HepG2 (cell line): ENCODE measurements at regions of chr20 and their contacts with region 1.

Region 1: GRCh38 chr20:37345339-37346230 is at the start of gene SRC:
- DNase-seq: peak; percentile 74
- ATAC-seq: peak; percentile 29
- H3K4me3 ChIP-seq: peak within 1 kb of the TSS; percentile 78 to 89 (median 80)
- H3K27ac ChIP-seq: peak within 1 kb of the TSS; percentile 81
- H3K4me1 ChIP-seq: peaks cover 79% of the 10 kb centered on the region
- H3K27me3 ChIP-seq: peaks cover 0 to 5% of the 10 kb centered on the region in 2 experiments; a peak in 1 of 5 replicates
- CTCF ChIP-seq: no peak
- EP300 ChIP-seq: peak in 1 of 2 experiments; percentile 15; a peak in 1 of 4 replicates
- POLR2A ChIP-seq: peak; percentile 70 to 81
- RAD21 ChIP-seq: peak; percentile 47; the same call in 1 of the 2 replicates
- total RNA-seq, gene SRC: 54.7 and 59.7 TPM in 2 replicates

Region 2: GRCh38 chr20:37265152-37265551 is 80.4 kb before region 1 on chr20:
- CTCF ChIA-PET with region 1: no interaction called
- POLR2A ChIA-PET with region 1: interaction called, 16 read pairs
- in situ Hi-C with region 1: no loop called
- intact Hi-C with region 1: loop called (anchors 2 kb)
- DNase-seq: no peak
- ATAC-seq: no peak
- H3K4me3 ChIP-seq: no peak overlapping the region
- H3K27ac ChIP-seq: no peak overlapping the region
- H3K4me1 ChIP-seq: peaks cover 23% of the 10 kb centered on the region
- H3K27me3 ChIP-seq: peaks cover 9 to 46% of the 10 kb centered on the region in 2 experiments; a peak in 4 of 5 replicates
- CTCF ChIP-seq: no peak
- EP300 ChIP-seq: no peak
- POLR2A ChIP-seq: no peak
- RAD21 ChIP-seq: no peak

Region 3: GRCh38 chr20:37282556-37282955 is 63.0 kb before region 1 on chr20:
- CTCF ChIA-PET with region 1: no interaction called
- POLR2A ChIA-PET with region 1: interaction called, 48 read pairs
- in situ Hi-C with region 1: no loop called
- intact Hi-C with region 1: no loop called
- DNase-seq: no peak
- ATAC-seq: no peak
- H3K4me3 ChIP-seq: no peak overlapping the region
- H3K27ac ChIP-seq: no peak overlapping the region
- H3K4me1 ChIP-seq: peaks cover 74% of the 10 kb centered on the region
- H3K27me3 ChIP-seq: no peaks in the 10 kb centered on the region
- CTCF ChIP-seq: no peak
- EP300 ChIP-seq: no peak
- POLR2A ChIP-seq: no peak
- RAD21 ChIP-seq: no peak

Region 4: GRCh38 chr20:37331060-37331857 is 14.3 kb before region 1 on chr20:
- CTCF ChIA-PET with region 1: no interaction called
- POLR2A ChIA-PET with region 1: interaction called, 59 read pairs
- in situ Hi-C with region 1: no loop called
- intact Hi-C with region 1: loop called (anchors 1 kb)
- DNase-seq: no peak
- ATAC-seq: no peak
- H3K4me3 ChIP-seq: peak overlapping the region in 2 of 3 experiments; percentile 48 to 71; a peak in 2 of 6 replicates
- H3K27ac ChIP-seq: no peak overlapping the region
- H3K4me1 ChIP-seq: peaks cover 79% of the 10 kb centered on the region
- H3K27me3 ChIP-seq: no peaks in the 10 kb centered on the region
- CTCF ChIP-seq: no peak
- EP300 ChIP-seq: no peak
- POLR2A ChIP-seq: no peak
- RAD21 ChIP-seq: no peak

Region 5: GRCh38 chr20:37527638-37528441 is 182.3 kb after region 1 on chr20 and contains the start of gene BLCAP:
- CTCF ChIA-PET with region 1: no interaction called
- POLR2A ChIA-PET with region 1: interaction called, 16 read pairs
- in situ Hi-C with region 1: no loop called
- intact Hi-C with region 1: loop called (anchors 2 kb)
- DNase-seq: peak; percentile 93
- ATAC-seq: peak; percentile 91
- H3K4me3 ChIP-seq: peak within 1 kb of the TSS; percentile 82 to 100 (median 95)
- H3K27ac ChIP-seq: peak within 1 kb of the TSS; percentile 96
- H3K4me1 ChIP-seq: peaks cover 65% of the 10 kb centered on the region
- H3K27me3 ChIP-seq: no peaks in the 10 kb centered on the region; a peak in 1 of 5 replicates
- CTCF ChIP-seq: peak; percentile 39
- EP300 ChIP-seq: peak; percentile 24 to 46; a peak in 3 of 4 replicates
- POLR2A ChIP-seq: peak; percentile 92 to 95
- RAD21 ChIP-seq: peak; percentile 44
- total RNA-seq, gene BLCAP: 34.9 and 52.4 TPM in 2 replicates